ENCODE measurements at regions of chr12 and their contacts with region 1.

Region 1: DNA sequence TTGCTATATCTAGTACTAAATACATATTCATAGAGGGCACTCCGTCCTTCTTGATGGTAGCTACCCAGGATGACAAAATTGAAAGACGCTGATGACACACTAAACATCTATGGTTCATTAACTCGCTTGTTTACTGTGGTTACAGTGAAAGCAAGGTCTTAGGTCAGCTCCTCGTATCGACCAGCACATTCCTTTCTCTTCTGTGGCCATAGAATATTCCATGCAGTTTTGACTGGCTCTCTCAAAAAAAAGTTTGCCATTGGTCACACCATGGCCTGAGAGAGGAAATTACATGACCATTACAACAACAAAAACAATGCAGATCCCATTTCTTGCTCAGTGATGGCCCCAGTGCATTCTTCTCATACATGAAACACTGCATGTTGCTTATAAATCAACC is 411.4 kb upstream of the SOX5 start:
- DNase-seq: no peak
- ATAC-seq: no peak
- H3K4me3 ChIP-seq: no peak overlapping the region
- H3K27ac ChIP-seq: no peak overlapping the region
- H3K4me1 ChIP-seq: peaks cover 0 to 5% (median 0%) of the 10 kb centered on the region in 12 donors
- H3K27me3 ChIP-seq: no peaks in the 10 kb centered on the region
- CTCF ChIP-seq: no peak
- POLR2A ChIP-seq: no peak

Region 2: GRCh38 chr12:23950775-23951451 is 410.0 kb before region 1 on chr12:
- intact Hi-C with region 1: no loop called
- DNase-seq: peak in 1 of 5 donors; percentile 44
- ATAC-seq: peak; percentile 43 to 57 (median 48)
- H3K4me3 ChIP-seq: peak overlapping the region in 11 of 12 donors; percentile 20 to 60 (median 47)
- H3K27ac ChIP-seq: peak overlapping the region in 2 of 12 donors; percentile 3 to 23
- H3K4me1 ChIP-seq: peaks cover 0 to 2% (median 0%) of the 10 kb centered on the region in 12 donors
- H3K27me3 ChIP-seq: peaks cover 0 to 22% (median 7%) of the 10 kb centered on the region in 9 donors
- CTCF ChIP-seq: peak in 1 of 12 donors; percentile 1
- POLR2A ChIP-seq: no peak

Region 3: GRCh38 chr12:24328261-24328660 is 32.6 kb before region 1 on chr12:
- intact Hi-C with region 1: no loop called
- DNase-seq: no peak
- ATAC-seq: no peak
- H3K4me3 ChIP-seq: no peak overlapping the region
- H3K27ac ChIP-seq: no peak overlapping the region
- H3K4me1 ChIP-seq: no peaks in the 10 kb centered on the region
- H3K27me3 ChIP-seq: no peaks in the 10 kb centered on the region
- CTCF ChIP-seq: no peak
- POLR2A ChIP-seq: no peak

Region 4: GRCh38 chr12:24778486-24779304 is 417.8 kb after region 1 on chr12:
- intact Hi-C with region 1: loop called in 1 of 10 experiments (anchors 5 kb)
- DNase-seq: no peak
- ATAC-seq: no peak
- H3K4me3 ChIP-seq: no peak overlapping the region
- H3K27ac ChIP-seq: no peak overlapping the region
- H3K4me1 ChIP-seq: no peaks in the 10 kb centered on the region
- H3K27me3 ChIP-seq: peaks cover 0 to 6% (median 0%) of the 10 kb centered on the region in 9 donors
- CTCF ChIP-seq: peak in 8 of 12 donors; percentile 5 to 42 (median 26)
- POLR2A ChIP-seq: no peak

Measured in heart left ventricle (tissue), 16 donors.